ENCODE measurements at regions of chr10 and their contacts with region 1.

Region 1: DNA sequence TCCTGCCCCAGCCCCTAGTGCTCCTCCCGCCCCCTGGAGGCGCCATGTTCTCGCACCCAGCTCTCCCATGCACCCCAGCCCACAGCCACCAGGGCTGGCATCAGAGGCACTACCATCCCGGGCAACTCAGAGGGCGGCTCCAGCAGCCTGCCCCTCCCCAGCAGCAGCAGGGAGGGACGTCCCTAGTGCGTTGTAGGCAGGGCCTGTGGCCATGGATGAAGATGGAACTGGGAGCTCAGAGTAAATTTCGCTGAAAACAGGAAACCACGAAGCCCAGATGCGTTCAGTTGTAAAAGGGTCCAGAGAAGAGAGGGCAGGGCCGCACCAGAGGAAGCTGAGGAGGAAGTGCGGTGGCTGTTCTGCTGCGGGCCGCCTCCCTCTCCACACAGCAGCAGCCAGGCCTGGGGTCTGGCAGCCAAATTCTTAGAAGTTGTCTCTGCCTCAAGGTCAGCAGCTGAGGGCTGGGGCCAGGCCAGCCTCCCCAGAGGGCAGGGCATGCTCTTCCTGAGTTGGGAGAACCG is 24.6 kb downstream of the VSIR start:
- DNase-seq: peak; percentile 96 to 99 (median 99)
- H3K4me3 ChIP-seq: peak overlapping the region in 4 of 7 experiments; percentile 11 to 29 (median 18)
- H3K27ac ChIP-seq: peak overlapping the region; percentile 60 to 82
- H3K4me1 ChIP-seq: peaks cover 26 to 91% (median 87%) of the 10 kb centered on the region in 4 experiments
- H3K27me3 ChIP-seq: no peaks in the 10 kb centered on the region

Region 2: DNA sequence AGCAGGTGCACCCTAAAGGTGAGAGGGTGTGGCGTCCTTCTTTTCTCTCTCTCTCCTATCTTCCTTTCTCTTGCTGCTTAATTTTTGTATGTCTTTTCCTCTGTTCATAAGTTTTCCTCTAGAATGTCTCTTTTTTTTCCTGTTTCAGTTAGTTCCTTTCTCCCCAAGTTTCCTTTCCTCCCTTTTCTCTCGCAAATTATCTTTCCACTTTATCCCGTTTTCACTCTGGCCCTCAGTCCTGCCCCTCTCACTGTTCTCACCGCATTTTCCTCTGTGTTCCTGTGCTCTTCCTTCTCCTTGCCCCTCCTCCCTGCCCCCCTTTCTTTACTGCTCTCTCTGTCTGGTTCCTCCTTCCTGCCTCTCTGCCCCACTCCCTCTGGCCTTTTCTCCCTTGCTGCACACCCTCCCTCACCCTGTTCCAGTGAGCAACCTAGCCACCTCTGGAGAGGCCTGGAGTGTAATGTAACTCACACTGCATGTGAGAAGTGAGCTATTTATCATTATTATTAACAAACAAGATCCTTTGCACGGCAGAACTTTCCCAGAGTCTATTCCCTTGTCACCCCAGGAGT is 187.6 kb before region 1 on chr10:
- CTCF ChIA-PET with region 1: no interaction called
- POLR2A ChIA-PET with region 1: no interaction called
- DNase-seq: peak in 1 of 3 donors; percentile 10
- H3K4me3 ChIP-seq: no peak overlapping the region
- H3K27ac ChIP-seq: no peak overlapping the region
- H3K4me1 ChIP-seq: peaks cover 0 to 7% (median 6%) of the 10 kb centered on the region in 4 experiments
- H3K27me3 ChIP-seq: peaks cover 0 to 8% (median 0%) of the 10 kb centered on the region in 5 experiments

Region 3: DNA sequence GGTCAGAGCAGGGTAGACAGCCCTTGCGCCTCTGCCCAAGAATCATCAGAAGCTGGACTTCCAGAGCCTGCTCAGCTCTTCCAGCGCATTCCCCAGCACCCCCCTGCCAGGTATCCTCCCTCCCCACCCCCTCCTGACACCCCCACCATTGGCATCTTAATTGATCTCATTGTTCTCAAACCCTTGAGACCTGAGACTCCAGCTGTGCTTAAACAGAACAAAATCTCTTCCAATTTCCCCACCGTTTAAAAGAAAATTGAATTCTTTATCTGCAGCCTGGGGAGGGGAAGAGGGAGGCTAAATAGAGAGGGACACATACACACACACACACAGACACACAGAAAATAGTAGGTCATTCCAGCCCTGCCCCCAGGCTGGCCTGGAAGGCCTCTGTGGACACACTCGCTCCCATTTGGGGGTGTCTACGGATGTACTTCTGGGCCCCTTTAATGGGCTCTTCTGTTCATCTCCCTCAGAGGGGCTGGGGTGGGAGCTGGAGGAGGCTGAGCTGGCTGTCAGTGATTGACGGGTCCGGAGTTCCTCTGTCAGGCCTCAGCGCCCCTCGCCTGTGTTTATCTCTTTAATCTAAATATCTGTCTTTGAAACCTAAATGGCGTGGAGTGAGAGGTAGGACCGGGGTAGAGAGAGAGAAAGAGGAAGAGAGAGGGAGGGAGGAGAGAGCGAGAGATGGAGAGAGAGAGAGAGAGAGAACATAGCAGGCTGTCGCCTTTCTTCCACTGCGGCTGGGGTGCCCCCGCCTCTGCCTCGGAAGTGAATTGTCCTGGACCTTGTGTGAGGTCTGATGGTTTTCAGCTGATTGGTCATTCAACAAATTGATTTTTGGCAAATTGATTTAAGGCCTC is 90.9 kb before region 1 on chr10:
- CTCF ChIA-PET with region 1: no interaction called
- POLR2A ChIA-PET with region 1: no interaction called
- DNase-seq: peak in 2 of 3 donors; percentile 40 to 59
- H3K4me3 ChIP-seq: no peak overlapping the region
- H3K27ac ChIP-seq: no peak overlapping the region
- H3K4me1 ChIP-seq: peaks cover 0 to 23% (median 13%) of the 10 kb centered on the region in 4 experiments
- H3K27me3 ChIP-seq: no peaks in the 10 kb centered on the region

Region 4: GRCh38 chr10:71719042-71719441 is 29.7 kb before region 1 on chr10:
- CTCF ChIA-PET with region 1: interaction called, 21 read pairs
- POLR2A ChIA-PET with region 1: no interaction called
- DNase-seq: no peak
- H3K4me3 ChIP-seq: no peak overlapping the region
- H3K27ac ChIP-seq: no peak overlapping the region
- H3K4me1 ChIP-seq: peaks cover 4 to 48% (median 30%) of the 10 kb centered on the region in 4 experiments
- H3K27me3 ChIP-seq: no peaks in the 10 kb centered on the region

Region 5: GRCh38 chr10:71766702-71767419 is 18.1 kb after region 1 on chr10:
- CTCF ChIA-PET with region 1: interaction called, 159 read pairs
- POLR2A ChIA-PET with region 1: interaction called, 3 read pairs
- DNase-seq: peak in 1 of 3 donors; percentile 28
- H3K4me3 ChIP-seq: no peak overlapping the region
- H3K27ac ChIP-seq: peak overlapping the region in 1 of 2 experiments; percentile 35
- H3K4me1 ChIP-seq: peaks cover 27 to 83% (median 71%) of the 10 kb centered on the region in 4 experiments
- H3K27me3 ChIP-seq: no peaks in the 10 kb centered on the region